Common myeloid progenitor, CD34-positive (primary cell): ENCODE measurements at regions of chr15 and their contacts with region 1.

Region 1: GRCh38 chr15:85044251-85044853 is 62.7 kb downstream of the PDE8A start:
- DNase-seq: peak; percentile 49 to 75 (median 61)
- H3K4me3 ChIP-seq: no peak overlapping the region
- H3K27ac ChIP-seq: no peak overlapping the region
- H3K4me1 ChIP-seq: peaks cover 5 to 19% (median 12%) of the 10 kb centered on the region in 4 experiments
- H3K27me3 ChIP-seq: no peaks in the 10 kb centered on the region

Region 2: GRCh38 chr15:85030301-85031049 is 13.9 kb before region 1 on chr15:
- CTCF ChIA-PET with region 1: interaction called, 16 read pairs
- POLR2A ChIA-PET with region 1: no interaction called
- DNase-seq: peak in 2 of 3 donors; percentile 23 to 36
- H3K4me3 ChIP-seq: no peak overlapping the region
- H3K27ac ChIP-seq: no peak overlapping the region
- H3K4me1 ChIP-seq: peaks cover 0 to 14% (median 3%) of the 10 kb centered on the region in 4 experiments
- H3K27me3 ChIP-seq: no peaks in the 10 kb centered on the region